Tibial artery (tissue), 4 donors: ENCODE measurements at regions of chr5 and their contacts with region 1.

Region 1: DNA sequence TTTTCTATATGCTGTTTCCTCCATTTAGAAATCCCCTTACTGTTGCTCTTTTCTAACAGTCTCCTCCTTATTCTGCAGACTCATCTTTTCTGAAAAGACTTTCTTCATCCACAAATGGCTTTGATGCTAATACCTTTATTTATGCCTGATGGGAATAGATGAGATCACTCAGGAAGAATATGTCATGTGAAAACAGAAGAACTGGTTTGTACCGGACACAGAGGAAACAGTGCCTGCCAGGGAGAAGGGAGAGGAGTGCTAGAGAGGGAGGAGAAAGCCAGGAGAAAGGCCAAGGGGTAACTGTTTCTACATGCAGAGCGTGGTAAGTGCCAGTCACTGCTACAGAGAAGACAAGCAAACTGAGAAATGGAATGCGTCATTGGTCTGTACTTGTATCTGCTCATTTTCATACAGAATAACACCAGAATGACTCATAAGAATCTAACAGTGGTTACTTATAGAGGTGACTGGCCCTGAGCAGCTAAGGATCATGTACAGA is 45.9 kb upstream of the PJA2 start:
- DNase-seq: peak; percentile 63 to 82
- H3K4me3 ChIP-seq: peak overlapping the region in 1 of 2 donors; percentile 7
- H3K27ac ChIP-seq: peak overlapping the region; percentile 50 to 66
- H3K4me1 ChIP-seq: peaks cover 0 to 26% (median 6%) of the 10 kb centered on the region in 4 donors
- H3K27me3 ChIP-seq: no peaks in the 10 kb centered on the region
- CTCF ChIP-seq: no peak

Region 2: DNA sequence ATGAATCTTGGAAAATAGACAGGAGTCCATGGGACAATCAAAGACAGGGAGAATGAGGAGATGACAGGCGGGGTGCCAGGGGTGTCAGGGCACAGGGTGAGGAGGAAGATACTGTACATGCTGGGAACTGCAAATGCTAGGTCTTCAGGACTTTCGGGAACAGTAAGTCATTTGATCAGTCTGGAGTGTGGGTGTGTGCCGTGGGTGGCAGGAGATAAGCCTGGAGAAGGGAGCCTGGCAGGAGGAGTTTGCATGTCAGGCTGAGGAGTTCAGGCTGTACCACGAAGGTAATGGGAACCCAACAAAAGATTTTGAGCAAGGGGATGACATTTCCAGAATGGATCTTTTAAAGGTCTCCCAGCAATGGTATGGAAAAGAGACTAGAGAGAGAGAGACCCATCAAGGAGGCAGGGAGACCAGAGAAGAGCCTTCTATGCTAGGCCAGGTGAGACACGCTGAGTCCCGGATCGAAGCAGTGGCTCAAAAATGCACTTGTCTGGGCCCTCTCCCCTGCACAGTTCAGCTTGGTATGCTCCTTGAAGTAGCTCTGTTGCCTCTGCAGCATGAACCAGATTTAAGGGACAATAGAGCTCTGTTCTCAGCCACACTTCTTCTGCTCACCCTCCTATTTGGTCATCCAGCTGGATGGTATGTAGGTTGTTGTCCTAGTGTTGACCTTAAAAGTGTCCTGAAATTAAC is 784.9 kb before region 1 on chr5:
- intact Hi-C with region 1: loop called (anchors 10 kb)
- DNase-seq: no peak
- H3K4me3 ChIP-seq: no peak overlapping the region
- H3K27ac ChIP-seq: no peak overlapping the region
- H3K4me1 ChIP-seq: no peaks in the 10 kb centered on the region
- H3K27me3 ChIP-seq: no peaks in the 10 kb centered on the region
- CTCF ChIP-seq: no peak

Region 3: DNA sequence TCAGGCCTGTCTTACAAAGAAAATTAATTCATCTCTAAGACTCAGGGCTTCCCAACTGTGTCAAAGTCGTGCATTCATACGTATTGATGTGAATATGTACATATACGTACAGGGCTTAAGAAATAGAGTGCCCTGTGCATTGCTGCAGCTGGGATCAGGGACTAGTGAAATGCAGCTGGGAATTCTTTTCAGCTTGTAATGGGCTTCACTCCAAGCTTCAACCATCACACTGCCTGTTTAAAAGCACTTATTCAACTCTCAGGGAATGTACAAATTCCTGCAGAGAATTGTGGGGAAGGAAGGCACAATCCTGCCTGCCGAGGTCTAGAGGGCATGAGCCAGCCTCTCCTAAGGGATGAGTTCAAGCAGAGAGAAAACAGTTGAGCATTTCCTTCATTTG is 174.4 kb after region 1 on chr5:
- intact Hi-C with region 1: no loop called
- DNase-seq: no peak
- H3K4me3 ChIP-seq: no peak overlapping the region
- H3K27ac ChIP-seq: no peak overlapping the region
- H3K4me1 ChIP-seq: peaks cover 0 to 11% (median 3%) of the 10 kb centered on the region in 4 donors
- H3K27me3 ChIP-seq: no peaks in the 10 kb centered on the region
- CTCF ChIP-seq: no peak